PC-9 (cell line): ENCODE measurements at regions of chr16 and their contacts with region 1.

Region 1: GRCh38 chr16:21523411-21524067 is 75.8 kb upstream of the METTL9 start:
- DNase-seq: peak in 1 of 2 experiments; percentile 32
- H3K4me3 ChIP-seq: no peak overlapping the region
- H3K27ac ChIP-seq: no peak overlapping the region
- H3K4me1 ChIP-seq: peaks cover 22% of the 10 kb centered on the region
- H3K27me3 ChIP-seq: no peaks in the 10 kb centered on the region
- CTCF ChIP-seq: no peak

Region 2: DNA sequence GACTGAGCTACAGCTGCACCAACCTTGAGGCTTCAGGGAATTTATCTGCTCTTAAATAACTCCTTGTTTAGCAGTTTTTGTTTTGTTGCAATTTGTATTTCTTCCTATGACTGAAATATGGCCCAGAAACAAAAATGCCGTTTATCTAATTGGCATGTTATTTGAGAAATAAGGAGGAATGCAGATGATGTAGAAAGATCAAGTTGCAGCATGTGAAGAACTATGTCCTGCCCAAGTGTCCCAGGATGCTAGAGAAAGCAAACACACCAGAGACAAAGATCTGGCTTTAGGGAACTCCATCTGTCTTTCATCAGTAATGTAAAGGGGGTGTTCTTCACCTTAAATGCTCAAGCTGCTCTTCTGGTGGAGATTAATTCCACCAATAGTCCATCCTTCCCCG is 1596.0 kb after region 1 on chr16:
- CTCF ChIA-PET with region 1: no interaction called
- POLR2A ChIA-PET with region 1: interaction called, 12 read pairs
- intact Hi-C with region 1: no loop called
- DNase-seq: no peak
- H3K4me3 ChIP-seq: no peak overlapping the region
- H3K27ac ChIP-seq: no peak overlapping the region
- H3K4me1 ChIP-seq: no peaks in the 10 kb centered on the region
- H3K27me3 ChIP-seq: no peaks in the 10 kb centered on the region
- CTCF ChIP-seq: no peak